ENCODE measurements at regions of chr1 and their contacts with region 1.

Region 1: GRCh38 chr1:8727809-8728213 is 89.6 kb downstream of the RERE start:
- DNase-seq: no peak
- H3K4me3 Mint-ChIP-seq: no peak overlapping the region
- H3K27ac Mint-ChIP-seq: no peak overlapping the region
- H3K4me1 Mint-ChIP-seq: peaks cover 21% of the 10 kb centered on the region
- H3K27me3 Mint-ChIP-seq: no peaks in the 10 kb centered on the region

Region 2: DNA sequence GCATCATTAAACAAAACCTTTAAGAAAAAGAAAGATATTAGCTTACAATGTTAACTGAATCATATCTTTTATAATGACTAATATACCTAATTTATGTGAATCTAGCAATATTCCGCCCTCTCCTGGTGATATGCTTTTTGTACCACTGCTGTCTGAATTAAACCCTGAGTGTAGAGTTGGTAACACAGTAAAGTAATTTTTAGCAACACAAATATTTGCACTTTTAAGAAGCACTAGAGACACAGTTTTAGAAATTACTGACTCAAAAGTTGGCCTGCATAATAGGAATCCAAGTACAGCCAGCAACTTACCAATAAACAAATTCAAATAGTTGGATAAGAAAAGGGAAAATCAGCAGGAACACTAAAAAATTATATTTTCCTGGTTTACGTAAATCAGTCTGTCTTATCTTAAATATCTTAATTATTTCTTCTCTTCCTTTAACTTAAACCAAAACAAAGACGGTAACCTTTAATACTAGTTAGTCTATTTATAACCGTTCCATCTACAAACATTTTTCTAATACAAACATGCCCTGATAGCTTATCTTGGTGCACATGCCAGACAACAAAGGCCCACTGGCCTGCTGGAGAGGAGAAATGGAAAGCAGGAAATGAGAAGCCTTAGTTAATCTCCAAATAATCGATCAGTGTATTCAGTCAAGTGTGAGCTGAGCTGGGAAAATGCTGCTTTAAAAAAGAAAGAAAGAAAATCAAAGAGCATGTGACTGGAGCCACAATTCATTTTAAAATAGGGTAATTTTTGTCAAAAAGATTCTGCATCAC is 156.4 kb before region 1 on chr1:
- CTCF ChIA-PET with region 1: interaction called, 23 read pairs
- POLR2A ChIA-PET with region 1: no interaction called
- DNase-seq: no peak
- H3K4me3 Mint-ChIP-seq: no peak overlapping the region
- H3K27ac Mint-ChIP-seq: no peak overlapping the region
- H3K4me1 Mint-ChIP-seq: peaks cover 10% of the 10 kb centered on the region
- H3K27me3 Mint-ChIP-seq: no peaks in the 10 kb centered on the region

Region 3: GRCh38 chr1:8584316-8584715 is 143.5 kb before region 1 on chr1:
- CTCF ChIA-PET with region 1: interaction called, 16 read pairs
- POLR2A ChIA-PET with region 1: no interaction called
- DNase-seq: no peak
- H3K4me3 Mint-ChIP-seq: no peak overlapping the region
- H3K27ac Mint-ChIP-seq: no peak overlapping the region
- H3K4me1 Mint-ChIP-seq: peaks cover 12% of the 10 kb centered on the region
- H3K27me3 Mint-ChIP-seq: no peaks in the 10 kb centered on the region

Region 4: GRCh38 chr1:8671306-8671917 is 56.4 kb before region 1 on chr1:
- CTCF ChIA-PET with region 1: interaction called, 16 read pairs
- POLR2A ChIA-PET with region 1: no interaction called
- DNase-seq: no peak
- H3K4me3 Mint-ChIP-seq: no peak overlapping the region
- H3K27ac Mint-ChIP-seq: no peak overlapping the region
- H3K4me1 Mint-ChIP-seq: peaks cover 39% of the 10 kb centered on the region
- H3K27me3 Mint-ChIP-seq: no peaks in the 10 kb centered on the region

Region 5: DNA sequence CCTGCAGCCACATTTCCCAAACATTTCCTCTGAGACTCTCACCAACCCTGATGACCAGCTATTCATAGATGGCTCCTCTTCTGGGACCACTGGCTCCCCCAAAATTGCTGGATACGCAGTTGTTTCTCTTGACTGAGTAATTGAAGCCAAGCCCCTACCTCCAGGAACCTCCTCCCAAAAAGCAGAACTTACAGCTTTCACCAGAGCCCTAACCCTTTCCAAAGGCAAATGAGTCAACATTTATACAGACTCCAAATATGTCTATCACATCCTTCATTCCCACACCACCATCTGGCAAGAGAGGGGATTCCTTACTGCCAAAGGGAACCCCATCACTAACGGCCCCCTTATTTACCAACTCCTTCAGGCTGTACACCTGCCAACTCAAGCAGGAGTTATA is 197.6 kb after region 1 on chr1:
- CTCF ChIA-PET with region 1: no interaction called
- POLR2A ChIA-PET with region 1: no interaction called
- DNase-seq: no peak
- H3K4me3 Mint-ChIP-seq: no peak overlapping the region
- H3K27ac Mint-ChIP-seq: no peak overlapping the region
- H3K4me1 Mint-ChIP-seq: peaks cover 27% of the 10 kb centered on the region
- H3K27me3 Mint-ChIP-seq: no peaks in the 10 kb centered on the region

Measured in activated CD4-positive, alpha-beta memory T cell treated with anti-CD3 and anti-CD28 coated beads, Interleukin-2, amount 10 ng/mL, durations not matched to agents 7 days and 5 days (primary cell).